ENCODE measurements at regions of chr11 and their contacts with region 1.

Region 1: DNA sequence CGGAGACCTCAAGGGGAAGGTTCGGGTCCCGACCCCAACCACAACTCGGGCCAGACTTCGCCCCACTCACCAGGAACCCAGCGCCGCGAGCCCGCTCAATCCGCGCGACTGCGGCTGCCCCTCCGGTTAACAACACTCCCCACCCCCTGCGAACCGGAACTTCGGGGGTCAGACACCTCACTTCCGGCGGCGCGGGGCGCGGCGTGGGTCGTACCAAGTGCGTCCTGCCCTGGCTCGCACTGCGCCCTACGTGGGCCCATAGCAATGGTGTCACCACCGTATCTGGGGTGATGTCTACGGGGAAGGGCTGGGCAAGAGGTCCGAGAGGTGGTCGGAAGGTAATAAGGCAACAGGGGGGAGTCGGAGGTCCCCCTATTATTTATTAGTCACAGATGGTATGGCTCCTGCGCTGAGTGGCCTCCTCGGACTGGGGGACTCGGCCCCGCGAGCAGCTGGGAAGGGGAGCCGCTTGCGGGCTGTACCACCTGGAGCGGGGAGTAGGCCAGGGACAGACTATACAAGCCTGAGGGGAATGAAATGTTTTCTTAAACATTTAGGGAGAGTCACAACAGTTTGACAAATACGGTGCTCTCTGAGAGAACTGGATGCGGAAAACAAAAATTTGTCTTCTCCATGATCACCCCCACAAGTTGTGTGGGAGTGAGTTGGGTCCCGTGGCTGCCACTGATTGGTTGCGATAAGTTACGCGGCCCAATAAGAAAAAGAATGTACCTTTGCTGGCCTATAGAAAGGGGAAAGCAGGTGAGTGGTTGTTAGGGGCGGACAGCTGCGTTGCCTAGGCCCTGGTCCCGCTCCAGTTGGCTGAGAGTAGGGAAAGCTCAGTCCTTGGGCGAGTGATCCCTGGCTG is at the start of gene SYVN1:
- DNase-seq: peak; percentile 86 to 96 (median 90)
- ATAC-seq: peak; percentile 88
- H3K4me3 ChIP-seq: peak within 1 kb of the TSS; percentile 83
- H3K4me3 Mint-ChIP-seq: peak within 1 kb of the TSS; percentile 99
- H3K27ac ChIP-seq: peak within 1 kb of the TSS; percentile 96 to 99
- H3K27ac Mint-ChIP-seq: peak within 1 kb of the TSS; percentile 100
- H3K4me1 ChIP-seq: peaks cover 47% of the 10 kb centered on the region
- H3K4me1 Mint-ChIP-seq: peaks cover 45% of the 10 kb centered on the region
- H3K27me3 ChIP-seq: no peaks in the 10 kb centered on the region
- H3K27me3 Mint-ChIP-seq: no peaks in the 10 kb centered on the region
- CTCF ChIP-seq: no peak
- total RNA-seq, gene SYVN1: 89.1 to 96.8 TPM

Region 2: GRCh38 chr11:64916775-64917662 is 217.6 kb before region 1 on chr11 and contains the start of gene ATG2A:
- CTCF ChIA-PET with region 1: no interaction called
- POLR2A ChIA-PET with region 1: no interaction called
- intact Hi-C with region 1: loop called in 1 of 2 experiments (anchors 5 kb)
- DNase-seq: peak; percentile 97 to 100 (median 99)
- ATAC-seq: peak; percentile 96
- H3K4me3 ChIP-seq: peak within 1 kb of the TSS; percentile 89
- H3K4me3 Mint-ChIP-seq: peak within 1 kb of the TSS; percentile 93
- H3K27ac ChIP-seq: peak within 1 kb of the TSS; percentile 66 to 78
- H3K27ac Mint-ChIP-seq: peak within 1 kb of the TSS; percentile 81
- H3K4me1 ChIP-seq: peaks cover 33% of the 10 kb centered on the region
- H3K4me1 Mint-ChIP-seq: peaks cover 26% of the 10 kb centered on the region
- H3K27me3 ChIP-seq: no peaks in the 10 kb centered on the region
- H3K27me3 Mint-ChIP-seq: no peaks in the 10 kb centered on the region
- CTCF ChIP-seq: no peak
- total RNA-seq, gene ATG2A: 189 to 198 TPM

Region 3: DNA sequence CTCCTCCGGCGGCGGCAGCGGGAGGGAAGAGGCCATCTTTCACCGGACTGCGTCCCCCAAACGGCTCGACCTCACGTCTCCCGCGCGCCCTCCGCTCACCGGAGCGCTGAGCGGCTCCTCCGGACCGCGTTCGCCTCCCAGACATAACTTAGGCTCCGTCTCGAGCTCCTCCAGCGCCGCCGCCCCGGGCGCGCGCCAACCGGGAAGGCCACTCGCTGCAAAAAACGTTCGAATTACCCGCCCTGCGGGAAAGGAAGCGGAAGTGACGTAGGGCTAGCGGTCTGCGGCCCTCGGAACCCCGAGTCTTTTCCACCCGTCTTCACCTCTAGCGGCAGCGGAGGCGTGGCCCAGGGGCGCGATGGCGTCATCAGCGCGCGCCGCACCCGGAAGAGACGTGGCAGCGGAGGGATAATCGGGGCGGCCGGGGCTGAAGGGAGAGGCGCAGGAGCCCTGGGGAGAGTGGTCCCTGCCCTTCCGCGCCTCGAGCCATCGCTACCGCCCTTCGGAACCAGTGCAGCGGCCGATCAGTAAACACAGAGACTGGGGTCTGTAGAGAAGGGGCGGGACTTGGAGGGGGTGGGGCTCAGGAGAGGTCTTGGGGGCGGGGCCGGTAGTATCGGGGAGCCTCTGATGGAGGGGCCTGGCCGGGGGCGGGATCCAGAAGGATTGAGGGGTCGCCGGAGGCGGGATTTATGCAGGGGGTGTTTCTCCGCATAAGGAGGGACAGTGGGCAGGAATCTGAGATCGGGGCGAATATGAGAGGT is 50.6 kb before region 1 on chr11 and contains the starts of genes CDCA5 and ZFPL1:
- CTCF ChIA-PET with region 1: no interaction called
- POLR2A ChIA-PET with region 1: interaction called, 16 read pairs
- intact Hi-C with region 1: no loop called
- DNase-seq: peak; percentile 92 to 98 (median 95)
- ATAC-seq: peak; percentile 87
- H3K4me3 ChIP-seq: peak within 1 kb of the TSS; percentile 80
- H3K4me3 Mint-ChIP-seq: peak within 1 kb of the TSS; percentile 98
- H3K27ac ChIP-seq: peak within 1 kb of the TSS; percentile 86 to 97
- H3K27ac Mint-ChIP-seq: peak within 1 kb of the TSS; percentile 97
- H3K4me1 ChIP-seq: peaks cover 21% of the 10 kb centered on the region
- H3K4me1 Mint-ChIP-seq: peaks cover 33% of the 10 kb centered on the region
- H3K27me3 ChIP-seq: no peaks in the 10 kb centered on the region
- H3K27me3 Mint-ChIP-seq: no peaks in the 10 kb centered on the region
- CTCF ChIP-seq: no peak
- total RNA-seq, gene CDCA5: 0.77 to 0.84 TPM
- total RNA-seq, gene ZFPL1: 46.2 to 47.7 TPM

Region 4: DNA sequence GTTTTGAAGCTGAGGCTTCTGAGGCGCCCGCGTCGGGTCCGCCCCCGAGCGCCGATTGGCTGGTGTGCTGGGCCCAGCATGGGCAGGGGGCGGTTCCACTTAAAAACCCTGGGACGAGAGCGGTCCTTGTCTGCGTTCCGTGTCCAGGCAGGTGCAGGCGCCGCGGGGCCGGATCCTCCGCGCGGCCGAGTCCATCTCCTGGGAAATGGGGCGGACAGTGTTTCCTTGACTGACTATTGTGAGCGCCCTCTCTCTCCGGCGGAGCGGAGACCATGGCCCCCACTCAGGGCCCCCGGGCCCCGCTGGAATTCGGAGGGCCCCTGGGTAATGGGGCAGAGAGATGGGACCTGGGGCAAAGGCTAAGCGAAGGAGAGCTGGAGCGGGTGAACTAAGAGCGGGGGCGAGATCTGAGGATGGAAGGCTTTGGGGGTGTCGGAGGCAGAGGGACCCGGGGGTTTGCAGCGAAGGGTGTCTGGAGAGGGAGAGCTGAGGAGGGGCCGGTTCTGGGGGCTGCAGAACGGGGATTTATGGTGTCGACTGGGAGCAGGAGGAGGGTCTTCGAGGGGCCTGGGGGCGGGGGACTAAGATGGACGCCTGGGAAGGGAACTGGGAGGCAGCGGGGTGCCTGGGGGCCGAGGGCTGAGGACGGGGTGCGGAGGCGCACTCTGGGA is 22.7 kb before region 1 on chr11 and contains the start of gene TM7SF2:
- CTCF ChIA-PET with region 1: interaction called, 11 read pairs
- POLR2A ChIA-PET with region 1: interaction called, 57 read pairs
- intact Hi-C with region 1: loop called in 1 of 2 experiments (anchors 2 kb)
- DNase-seq: peak; percentile 88 to 98 (median 94)
- ATAC-seq: peak; percentile 75
- H3K4me3 ChIP-seq: peak within 1 kb of the TSS; percentile 81
- H3K4me3 Mint-ChIP-seq: peak within 1 kb of the TSS; percentile 95
- H3K27ac ChIP-seq: peak within 1 kb of the TSS; percentile 62 to 68
- H3K27ac Mint-ChIP-seq: peak within 1 kb of the TSS; percentile 92
- H3K4me1 ChIP-seq: peaks cover 63% of the 10 kb centered on the region
- H3K4me1 Mint-ChIP-seq: peaks cover 36% of the 10 kb centered on the region
- H3K27me3 ChIP-seq: no peaks in the 10 kb centered on the region
- H3K27me3 Mint-ChIP-seq: no peaks in the 10 kb centered on the region
- CTCF ChIP-seq: no peak
- total RNA-seq, gene TM7SF2: 20.0 to 20.4 TPM

Region 5: GRCh38 chr11:65169164-65169641 is 34.6 kb after region 1 on chr11:
- CTCF ChIA-PET with region 1: no interaction called
- POLR2A ChIA-PET with region 1: no interaction called
- intact Hi-C with region 1: no loop called
- DNase-seq: no peak
- ATAC-seq: no peak
- H3K4me3 ChIP-seq: no peak overlapping the region
- H3K4me3 Mint-ChIP-seq: no peak overlapping the region
- H3K27ac ChIP-seq: no peak overlapping the region
- H3K27ac Mint-ChIP-seq: peak overlapping the region; percentile 24
- H3K4me1 ChIP-seq: peaks cover 9% of the 10 kb centered on the region
- H3K4me1 Mint-ChIP-seq: no peaks in the 10 kb centered on the region
- H3K27me3 ChIP-seq: no peaks in the 10 kb centered on the region
- H3K27me3 Mint-ChIP-seq: no peaks in the 10 kb centered on the region
- CTCF ChIP-seq: no peak

Region 6: DNA sequence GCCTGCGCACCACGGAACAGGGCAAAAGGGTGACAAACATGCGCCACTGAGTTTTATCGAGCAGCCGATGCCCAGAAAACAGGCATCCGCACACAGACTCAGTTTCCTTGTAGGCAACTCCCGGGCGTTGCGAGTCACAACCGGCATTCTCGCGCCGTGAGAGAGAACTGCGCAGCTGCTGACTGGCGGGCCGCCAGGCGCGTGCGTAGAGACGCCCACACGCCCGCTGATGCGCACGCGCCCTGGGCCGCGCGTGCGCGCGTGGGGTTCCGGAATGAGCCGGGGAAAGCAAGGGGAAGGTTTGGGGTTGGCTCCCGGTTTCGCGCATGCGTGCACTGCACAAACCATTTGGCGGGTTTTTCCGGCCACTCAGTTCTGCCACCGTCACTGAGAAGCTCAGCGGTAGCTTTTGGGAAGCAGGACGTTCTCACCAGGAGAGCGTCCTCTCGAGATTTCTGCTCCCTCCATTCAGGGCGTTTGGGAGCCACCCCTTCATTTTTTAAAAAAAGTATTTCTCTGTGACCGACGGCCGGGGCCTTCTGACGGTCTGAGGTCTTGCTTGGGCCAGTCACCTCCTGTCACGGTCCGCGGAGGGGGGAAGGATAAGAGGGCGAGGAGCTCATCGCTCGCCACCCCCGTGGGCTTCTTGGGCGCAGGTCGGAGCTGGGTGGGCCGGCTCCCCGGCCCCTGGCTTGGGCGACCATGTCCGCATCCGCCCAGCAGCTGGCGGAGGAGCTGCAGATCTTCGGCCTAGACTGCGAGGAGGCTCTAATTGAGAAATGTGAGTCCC is 127.2 kb after region 1 on chr11 and contains the start of gene POLA2:
- CTCF ChIA-PET with region 1: no interaction called
- POLR2A ChIA-PET with region 1: interaction called, 20 read pairs
- intact Hi-C with region 1: no loop called
- DNase-seq: peak; percentile 90 to 99 (median 96)
- ATAC-seq: peak; percentile 88
- H3K4me3 ChIP-seq: peak within 1 kb of the TSS; percentile 84
- H3K4me3 Mint-ChIP-seq: peak within 1 kb of the TSS; percentile 92
- H3K27ac ChIP-seq: peak within 1 kb of the TSS; percentile 84 to 89
- H3K27ac Mint-ChIP-seq: peak within 1 kb of the TSS; percentile 91
- H3K4me1 ChIP-seq: peaks cover 31% of the 10 kb centered on the region
- H3K4me1 Mint-ChIP-seq: peaks cover 54% of the 10 kb centered on the region
- H3K27me3 ChIP-seq: no peaks in the 10 kb centered on the region
- H3K27me3 Mint-ChIP-seq: no peaks in the 10 kb centered on the region
- CTCF ChIP-seq: no peak
- total RNA-seq, gene POLA2: 9.6 to 10.6 TPM